Heart left ventricle (tissue), 16 donors: ENCODE measurements at regions of chr13 and their contacts with region 1.

Region 1: DNA sequence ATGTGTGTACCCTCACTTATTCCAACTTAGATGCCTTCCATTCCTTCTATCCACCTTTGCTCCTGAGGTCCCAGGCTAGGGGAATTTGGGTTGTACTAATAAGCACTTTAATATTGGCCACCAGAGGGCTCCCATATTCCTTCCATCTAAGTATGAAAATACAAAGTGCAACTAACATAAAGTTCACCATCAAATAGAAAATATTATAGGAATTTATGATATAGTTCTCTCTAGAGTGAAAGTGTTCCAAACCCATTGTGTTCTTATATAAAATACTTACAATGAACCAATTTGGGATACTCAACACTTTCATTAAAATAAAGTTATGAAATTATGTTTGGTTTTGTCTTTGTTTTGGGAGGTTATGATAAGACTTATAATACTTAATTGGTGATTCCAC is 62.3 kb downstream of the ITGBL1 start:
- DNase-seq: peak in 1 of 5 donors; percentile 13
- ATAC-seq: peak in 1 of 4 donors; percentile 63
- H3K4me3 ChIP-seq: no peak overlapping the region
- H3K27ac ChIP-seq: no peak overlapping the region
- H3K4me1 ChIP-seq: no peaks in the 10 kb centered on the region
- H3K27me3 ChIP-seq: no peaks in the 10 kb centered on the region
- CTCF ChIP-seq: peak; percentile 42 to 73 (median 60)
- POLR2A ChIP-seq: no peak

Region 2: DNA sequence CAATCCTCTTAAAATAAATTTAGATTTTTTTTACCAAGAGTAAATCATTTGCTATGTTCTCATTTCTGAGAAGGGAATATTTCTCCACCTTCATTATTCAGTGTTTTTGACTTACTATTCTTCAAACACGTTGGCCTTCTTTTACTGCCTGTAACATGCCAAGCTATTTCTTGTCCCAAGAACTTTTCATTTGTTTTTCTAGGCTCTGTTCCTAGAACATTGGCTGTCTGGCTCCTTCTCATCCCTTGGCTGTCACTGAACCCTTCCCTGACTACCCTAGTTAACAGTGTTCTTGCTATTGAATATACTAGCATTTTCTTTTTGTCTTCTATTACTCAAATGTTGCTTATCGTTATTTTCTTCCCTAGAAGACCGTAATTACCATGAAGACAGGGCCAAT is 185.8 kb after region 1 on chr13:
- intact Hi-C with region 1: loop called in 1 of 10 experiments (anchors 5 kb)
- DNase-seq: no peak
- ATAC-seq: peak; percentile 62 to 88 (median 83)
- H3K4me3 ChIP-seq: no peak overlapping the region
- H3K27ac ChIP-seq: peak overlapping the region in 4 of 12 donors; percentile 4 to 59 (median 44)
- H3K4me1 ChIP-seq: peaks cover 0 to 22% (median 0%) of the 10 kb centered on the region in 12 donors
- H3K27me3 ChIP-seq: no peaks in the 10 kb centered on the region
- CTCF ChIP-seq: no peak
- POLR2A ChIP-seq: no peak

Region 3: DNA sequence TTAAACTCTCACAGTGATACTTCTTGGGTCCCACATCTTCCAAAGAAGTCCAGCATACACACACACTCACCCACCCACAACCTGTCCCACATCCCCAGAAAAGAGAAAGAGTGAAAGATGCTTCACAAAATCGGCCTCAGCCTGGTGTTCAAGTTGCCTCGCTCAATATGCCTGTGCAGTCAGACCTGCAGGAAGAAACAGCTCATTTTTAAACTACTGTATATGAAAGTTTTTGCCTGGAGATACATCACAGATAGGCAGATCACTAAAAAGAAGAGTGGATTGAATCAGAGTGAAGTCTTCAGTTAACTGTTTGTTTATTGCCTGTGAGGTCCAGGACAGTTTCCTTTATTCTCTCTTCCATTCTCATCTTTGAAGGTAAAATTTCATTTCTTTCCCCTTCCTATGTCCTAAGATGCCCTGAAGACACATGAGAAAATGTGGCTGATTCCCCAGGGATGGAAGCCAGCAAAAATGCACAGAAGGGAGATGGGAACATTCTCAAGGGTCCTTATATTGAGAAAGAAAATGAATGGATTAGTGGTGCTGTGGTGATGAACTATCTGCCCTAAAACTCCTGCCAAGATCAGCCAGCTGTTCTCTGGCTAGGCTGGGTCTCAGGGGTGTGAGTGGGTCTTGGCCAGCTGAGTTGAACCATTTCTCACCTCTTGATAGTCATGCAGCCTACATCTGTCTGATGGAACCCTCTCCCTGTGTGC is 196.7 kb after region 1 on chr13:
- intact Hi-C with region 1: no loop called
- DNase-seq: peak in 2 of 5 donors; percentile 25 to 31
- ATAC-seq: peak in 2 of 4 donors; percentile 68 to 86
- H3K4me3 ChIP-seq: no peak overlapping the region
- H3K27ac ChIP-seq: no peak overlapping the region
- H3K4me1 ChIP-seq: peaks cover 0 to 8% (median 0%) of the 10 kb centered on the region in 12 donors
- H3K27me3 ChIP-seq: no peaks in the 10 kb centered on the region
- CTCF ChIP-seq: no peak
- POLR2A ChIP-seq: no peak

Region 4: DNA sequence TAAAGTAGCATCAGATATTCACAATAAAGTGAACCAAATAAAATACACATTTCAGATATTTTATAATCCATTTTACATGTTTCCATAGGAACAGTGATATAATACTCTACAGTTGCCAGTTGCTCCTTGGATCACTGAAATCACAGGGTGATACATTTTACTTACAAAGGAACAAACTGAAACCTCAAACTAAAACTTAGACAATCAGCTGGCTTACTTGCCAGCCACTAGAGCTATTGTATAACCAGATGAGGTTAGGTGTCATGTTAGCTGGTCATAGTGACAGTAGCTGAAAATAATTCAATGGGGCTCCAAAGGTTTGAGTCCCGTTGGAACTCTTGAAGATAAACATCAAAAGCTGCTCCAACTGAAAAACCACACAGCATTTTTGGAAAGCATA is 212.3 kb after region 1 on chr13:
- intact Hi-C with region 1: no loop called
- DNase-seq: no peak
- ATAC-seq: no peak
- H3K4me3 ChIP-seq: no peak overlapping the region
- H3K27ac ChIP-seq: no peak overlapping the region
- H3K4me1 ChIP-seq: no peaks in the 10 kb centered on the region
- H3K27me3 ChIP-seq: no peaks in the 10 kb centered on the region
- CTCF ChIP-seq: no peak
- POLR2A ChIP-seq: no peak

Region 5: GRCh38 chr13:101757446-101758039 is 242.8 kb after region 1 on chr13:
- intact Hi-C with region 1: loop called in 9 of 10 experiments (anchors 1 to 5 kb)
- DNase-seq: no peak
- ATAC-seq: peak in 2 of 4 donors; percentile 67 to 72
- H3K4me3 ChIP-seq: no peak overlapping the region
- H3K27ac ChIP-seq: no peak overlapping the region
- H3K4me1 ChIP-seq: no peaks in the 10 kb centered on the region
- H3K27me3 ChIP-seq: no peaks in the 10 kb centered on the region
- CTCF ChIP-seq: peak; percentile 26 to 56 (median 44)
- POLR2A ChIP-seq: no peak

Region 6: GRCh38 chr13:101916108-101916757 is 401.4 kb after region 1 on chr13:
- intact Hi-C with region 1: loop called in 1 of 10 experiments (anchors 5 kb)
- DNase-seq: peak; percentile 25 to 66 (median 45)
- ATAC-seq: peak; percentile 68 to 90 (median 84)
- H3K4me3 ChIP-seq: peak overlapping the region; percentile 29 to 59 (median 48)
- H3K27ac ChIP-seq: no peak overlapping the region
- H3K4me1 ChIP-seq: peaks cover 0 to 21% (median 4%) of the 10 kb centered on the region in 12 donors
- H3K27me3 ChIP-seq: peaks cover 9 to 75% (median 38%) of the 10 kb centered on the region in 9 donors
- CTCF ChIP-seq: peak in 11 of 12 donors; percentile 11 to 56 (median 43)
- POLR2A ChIP-seq: no peak